ENCODE measurements at regions of chr19 and their contacts with region 1.

Region 1: GRCh38 chr19:45523642-45524256 is 16.5 kb downstream of the VASP start:
- DNase-seq: peak; percentile 87
- H3K4me3 Mint-ChIP-seq: no peak overlapping the region
- H3K27ac Mint-ChIP-seq: peak overlapping the region; percentile 69
- H3K4me1 Mint-ChIP-seq: peaks cover 13% of the 10 kb centered on the region
- H3K27me3 Mint-ChIP-seq: no peaks in the 10 kb centered on the region
- CTCF ChIP-seq: peak; percentile 82

Region 2: DNA sequence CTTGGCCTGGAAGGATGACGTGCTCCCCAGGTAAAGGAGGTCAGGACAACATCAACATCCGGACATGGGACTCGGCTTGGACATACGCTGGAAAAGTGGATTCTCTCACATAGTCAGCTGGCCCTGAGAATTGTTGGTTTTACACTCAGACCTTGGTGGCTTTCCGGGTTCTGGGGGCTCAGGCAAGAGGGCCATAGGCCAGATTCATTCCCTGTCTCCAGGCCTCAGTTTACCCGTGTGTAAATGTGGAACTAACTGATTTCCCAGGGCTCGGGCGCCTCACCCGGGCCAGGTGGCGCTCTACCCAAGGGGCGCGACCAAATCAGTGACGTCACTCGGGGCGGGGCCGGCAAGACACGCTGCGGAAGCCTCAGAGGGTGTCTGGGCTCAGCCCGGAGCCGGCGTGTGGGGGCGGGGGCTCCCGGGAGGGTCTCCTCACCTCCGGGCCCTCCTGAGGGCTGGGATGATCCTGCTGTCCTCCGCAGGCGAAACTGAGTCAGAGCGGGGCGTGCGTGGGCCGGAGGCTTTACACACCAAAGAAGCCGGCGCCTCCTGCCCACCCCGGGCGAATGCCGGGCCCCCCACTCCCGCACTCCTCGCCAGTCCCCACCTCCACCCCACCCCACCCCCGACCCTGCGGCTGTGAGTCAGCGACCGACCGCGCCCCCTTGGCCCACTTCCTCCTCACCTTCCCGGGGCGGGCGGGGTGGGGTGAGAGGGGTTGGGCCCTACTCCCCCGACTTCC is 17.3 kb before region 1 on chr19:
- CTCF ChIA-PET with region 1: interaction called, 5 read pairs
- POLR2A ChIA-PET with region 1: interaction called, 3 read pairs
- intact Hi-C with region 1: loop called (anchors 1 kb)
- DNase-seq: peak; percentile 96
- H3K4me3 Mint-ChIP-seq: peak overlapping the region; percentile 99
- H3K27ac Mint-ChIP-seq: peak overlapping the region; percentile 91
- H3K4me1 Mint-ChIP-seq: peaks cover 26% of the 10 kb centered on the region
- H3K27me3 Mint-ChIP-seq: no peaks in the 10 kb centered on the region
- CTCF ChIP-seq: no peak

Region 3: DNA sequence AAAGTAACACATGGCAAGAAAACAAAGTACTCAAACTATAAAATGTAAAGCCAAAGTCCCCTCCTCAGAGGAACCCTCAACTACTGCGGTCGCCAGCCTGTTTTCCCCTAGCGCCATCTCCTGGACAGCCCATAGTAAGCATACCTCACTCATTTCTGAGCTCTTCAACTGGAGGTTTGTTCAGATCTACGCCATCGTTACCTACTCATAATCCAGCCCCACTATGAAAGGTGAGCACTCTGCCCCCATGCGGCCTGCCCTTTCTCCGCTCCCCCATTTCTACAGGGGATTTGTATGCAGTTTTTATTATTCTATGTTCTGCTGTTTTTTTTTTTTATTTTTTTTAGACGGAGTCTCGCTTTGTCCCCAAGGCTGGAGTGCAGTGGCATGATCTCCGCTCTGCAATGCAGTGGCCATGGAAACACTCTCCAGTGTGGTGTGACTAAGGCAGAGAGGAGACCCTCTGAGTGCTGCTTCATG is 34.7 kb after region 1 on chr19:
- CTCF ChIA-PET with region 1: interaction called, 7 read pairs
- POLR2A ChIA-PET with region 1: no interaction called
- intact Hi-C with region 1: loop called (anchors 1 kb)
- DNase-seq: peak; percentile 85
- H3K4me3 Mint-ChIP-seq: no peak overlapping the region
- H3K27ac Mint-ChIP-seq: no peak overlapping the region
- H3K4me1 Mint-ChIP-seq: no peaks in the 10 kb centered on the region
- H3K27me3 Mint-ChIP-seq: no peaks in the 10 kb centered on the region
- CTCF ChIP-seq: peak; percentile 64

Region 4: GRCh38 chr19:45598267-45599001 is 74.7 kb after region 1 on chr19:
- CTCF ChIA-PET with region 1: no interaction called
- POLR2A ChIA-PET with region 1: no interaction called
- intact Hi-C with region 1: no loop called
- DNase-seq: no peak
- H3K4me3 Mint-ChIP-seq: no peak overlapping the region
- H3K27ac Mint-ChIP-seq: no peak overlapping the region
- H3K4me1 Mint-ChIP-seq: peaks cover 17% of the 10 kb centered on the region
- H3K27me3 Mint-ChIP-seq: peaks cover 73% of the 10 kb centered on the region
- CTCF ChIP-seq: no peak